ENCODE measurements at regions of chr14 and their contacts with region 1.

Region 1: GRCh38 chr14:44961604-44962333 is at the starts of genes KLHL28 and TOGARAM1:
- DNase-seq: peak; percentile 95 to 97
- ATAC-seq: peak; percentile 91 to 98 (median 96)
- H3K4me3 ChIP-seq: peak within 1 kb of the TSS; percentile 89
- H3K27ac ChIP-seq: peak within 1 kb of the TSS; percentile 90
- H3K4me1 ChIP-seq: peaks cover 63% of the 10 kb centered on the region
- H3K27me3 ChIP-seq: no peaks in the 10 kb centered on the region
- CTCF ChIP-seq: no peak
- total RNA-seq, gene KLHL28: 10.4 to 15.5 (median 13.0) TPM
- total RNA-seq, gene TOGARAM1: 9.1 to 16.0 (median 11.5) TPM

Region 2: GRCh38 chr14:44897045-44897844 is 64.5 kb before region 1 on chr14:
- intact Hi-C with region 1: loop called (anchors 5 kb)
- DNase-seq: peak; percentile 98
- ATAC-seq: peak; percentile 98 to 100 (median 99)
- H3K4me3 ChIP-seq: peak overlapping the region; percentile 95
- H3K27ac ChIP-seq: peak overlapping the region; percentile 99
- H3K4me1 ChIP-seq: peaks cover 16% of the 10 kb centered on the region
- H3K27me3 ChIP-seq: no peaks in the 10 kb centered on the region
- CTCF ChIP-seq: no peak

Region 3: DNA sequence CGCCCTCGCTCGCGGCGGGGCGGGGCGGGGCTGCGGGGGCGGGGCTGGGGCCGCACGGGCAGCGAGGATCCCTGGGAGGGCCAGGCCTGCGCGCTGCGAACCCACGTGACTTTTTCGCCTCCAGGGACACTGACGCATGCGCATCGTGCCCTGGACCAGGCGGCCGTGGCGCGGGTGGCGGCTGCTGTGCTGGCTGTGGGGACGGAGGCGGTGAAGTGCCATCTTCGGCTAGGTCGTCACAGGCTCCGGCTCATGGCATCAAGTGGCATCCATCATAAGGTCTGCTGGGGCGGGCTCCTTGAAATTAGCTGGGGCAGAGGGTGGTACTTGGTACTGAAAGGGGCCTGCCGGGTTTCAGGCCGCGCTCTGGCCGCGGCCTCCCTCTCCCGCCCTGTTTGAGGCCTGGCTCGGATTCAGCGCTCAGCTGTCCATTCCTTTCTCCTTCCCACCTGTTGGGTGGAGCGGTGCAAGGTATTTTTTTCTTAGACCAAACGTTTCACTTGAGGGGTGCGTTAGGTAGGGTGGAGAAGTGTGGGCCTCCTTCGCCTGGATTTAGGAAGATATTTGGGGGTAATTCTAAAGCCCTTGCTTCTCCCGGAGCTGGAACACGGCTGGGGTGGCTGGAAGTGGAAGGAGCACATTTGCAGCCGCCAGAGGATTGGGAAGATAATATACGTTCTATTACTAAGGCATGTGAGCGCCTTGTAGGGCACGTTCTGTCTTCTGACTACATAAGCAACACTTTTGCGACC is 122.4 kb after region 1 on chr14 and contains the start of gene PRPF39:
- intact Hi-C with region 1: loop called (anchors 5 to 10 kb)
- DNase-seq: peak; percentile 96 to 98
- ATAC-seq: peak; percentile 99 to 100 (median 99)
- H3K4me3 ChIP-seq: peak within 1 kb of the TSS; percentile 88
- H3K27ac ChIP-seq: peak within 1 kb of the TSS; percentile 89
- H3K4me1 ChIP-seq: peaks cover 23% of the 10 kb centered on the region
- H3K27me3 ChIP-seq: no peaks in the 10 kb centered on the region
- CTCF ChIP-seq: no peak
- total RNA-seq, gene PRPF39: 13.8 to 32.4 (median 20.2) TPM

Measured in psoas muscle (tissue), 8 donors.